ENCODE measurements at regions of chr15 and their contacts with region 1.

Region 1: GRCh38 chr15:66497502-66498455 is at the start of gene SNAPC5:
- DNase-seq: peak; percentile 94 to 99 (median 96)
- ATAC-seq: peak; percentile 97
- H3K4me3 ChIP-seq: peak within 1 kb of the TSS; percentile 80
- H3K4me3 Mint-ChIP-seq: peak within 1 kb of the TSS; percentile 89 to 98 (median 97)
- H3K27ac ChIP-seq: peak within 1 kb of the TSS; percentile 91
- H3K27ac Mint-ChIP-seq: peak within 1 kb of the TSS; percentile 94 to 99 (median 98)
- H3K4me1 ChIP-seq: peaks cover 18 to 28% of the 10 kb centered on the region in 2 donors
- H3K4me1 Mint-ChIP-seq: peaks cover 21 to 66% (median 49%) of the 10 kb centered on the region in 7 donors
- H3K27me3 ChIP-seq: no peaks in the 10 kb centered on the region
- H3K27me3 Mint-ChIP-seq: no peaks in the 10 kb centered on the region
- total RNA-seq, gene SNAPC5: 20.4 to 35.9 (median 25.0) TPM

Region 2: DNA sequence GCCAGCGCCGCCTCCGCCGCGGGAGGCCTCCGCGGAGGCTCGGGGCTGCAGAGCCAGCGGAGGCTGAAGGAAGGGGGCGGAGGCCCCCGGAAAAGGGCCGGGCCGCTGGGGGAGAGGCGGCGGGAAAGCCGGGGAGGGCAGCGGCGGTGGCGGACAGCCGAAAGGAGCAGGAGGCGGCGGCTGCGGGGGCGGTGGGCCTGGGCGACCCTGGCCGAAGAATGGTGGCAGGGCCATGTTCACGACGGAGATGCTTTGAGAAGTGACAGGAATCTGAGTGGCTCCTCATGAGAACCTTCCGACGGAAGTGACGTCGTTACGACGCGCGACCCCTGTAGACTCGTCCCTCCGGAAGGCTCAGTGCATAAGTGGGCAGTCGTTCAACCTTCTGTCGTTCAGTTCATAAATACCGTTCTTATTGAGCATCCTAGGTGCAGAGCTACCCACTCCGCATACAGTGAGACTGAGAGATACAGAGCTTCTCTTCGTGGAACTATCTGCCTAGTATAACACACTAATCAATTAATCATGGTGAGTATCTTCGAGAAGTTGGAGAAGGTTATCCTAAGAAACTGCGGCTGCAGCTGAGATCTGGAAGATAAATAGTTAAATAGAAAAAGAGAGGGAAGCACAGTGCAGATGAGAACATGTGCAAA is 1364.1 kb before region 1 on chr15 and contains the start of gene PDCD7:
- CTCF ChIA-PET with region 1: no interaction called
- POLR2A ChIA-PET with region 1: no interaction called
- intact Hi-C with region 1: loop called in 1 of 2 experiments (anchors 5 kb)
- DNase-seq: peak; percentile 52 to 89 (median 81)
- ATAC-seq: peak; percentile 95
- H3K4me3 ChIP-seq: peak within 1 kb of the TSS; percentile 81
- H3K4me3 Mint-ChIP-seq: peak within 1 kb of the TSS; percentile 88 to 100 (median 92)
- H3K27ac ChIP-seq: peak within 1 kb of the TSS; percentile 94
- H3K27ac Mint-ChIP-seq: peak within 1 kb of the TSS; percentile 90 to 98 (median 96)
- H3K4me1 ChIP-seq: peaks cover 6 to 14% of the 10 kb centered on the region in 2 donors
- H3K4me1 Mint-ChIP-seq: peaks cover 20 to 43% (median 35%) of the 10 kb centered on the region in 7 donors
- H3K27me3 ChIP-seq: no peaks in the 10 kb centered on the region
- H3K27me3 Mint-ChIP-seq: peaks cover 0 to 2% (median 0%) of the 10 kb centered on the region in 5 donors
- total RNA-seq, gene PDCD7: 23.0 to 38.6 (median 36.9) TPM

Region 3: GRCh38 chr15:66251790-66252684 is 245.7 kb before region 1 on chr15:
- CTCF ChIA-PET with region 1: no interaction called
- POLR2A ChIA-PET with region 1: no interaction called
- intact Hi-C with region 1: loop called (anchors 1 kb)
- DNase-seq: peak in 7 of 9 donors; percentile 22 to 63 (median 36)
- ATAC-seq: peak; percentile 73
- H3K4me3 ChIP-seq: peak overlapping the region; percentile 76
- H3K4me3 Mint-ChIP-seq: peak overlapping the region; percentile 58 to 96 (median 79)
- H3K27ac ChIP-seq: no peak overlapping the region
- H3K27ac Mint-ChIP-seq: no peak overlapping the region
- H3K4me1 ChIP-seq: peaks cover 0 to 14% of the 10 kb centered on the region in 2 donors
- H3K4me1 Mint-ChIP-seq: peaks cover 7 to 28% (median 18%) of the 10 kb centered on the region in 7 donors
- H3K27me3 ChIP-seq: peaks cover 3 to 28% of the 10 kb centered on the region in 2 donors
- H3K27me3 Mint-ChIP-seq: peaks cover 54 to 89% (median 70%) of the 10 kb centered on the region in 5 donors

Region 4: DNA sequence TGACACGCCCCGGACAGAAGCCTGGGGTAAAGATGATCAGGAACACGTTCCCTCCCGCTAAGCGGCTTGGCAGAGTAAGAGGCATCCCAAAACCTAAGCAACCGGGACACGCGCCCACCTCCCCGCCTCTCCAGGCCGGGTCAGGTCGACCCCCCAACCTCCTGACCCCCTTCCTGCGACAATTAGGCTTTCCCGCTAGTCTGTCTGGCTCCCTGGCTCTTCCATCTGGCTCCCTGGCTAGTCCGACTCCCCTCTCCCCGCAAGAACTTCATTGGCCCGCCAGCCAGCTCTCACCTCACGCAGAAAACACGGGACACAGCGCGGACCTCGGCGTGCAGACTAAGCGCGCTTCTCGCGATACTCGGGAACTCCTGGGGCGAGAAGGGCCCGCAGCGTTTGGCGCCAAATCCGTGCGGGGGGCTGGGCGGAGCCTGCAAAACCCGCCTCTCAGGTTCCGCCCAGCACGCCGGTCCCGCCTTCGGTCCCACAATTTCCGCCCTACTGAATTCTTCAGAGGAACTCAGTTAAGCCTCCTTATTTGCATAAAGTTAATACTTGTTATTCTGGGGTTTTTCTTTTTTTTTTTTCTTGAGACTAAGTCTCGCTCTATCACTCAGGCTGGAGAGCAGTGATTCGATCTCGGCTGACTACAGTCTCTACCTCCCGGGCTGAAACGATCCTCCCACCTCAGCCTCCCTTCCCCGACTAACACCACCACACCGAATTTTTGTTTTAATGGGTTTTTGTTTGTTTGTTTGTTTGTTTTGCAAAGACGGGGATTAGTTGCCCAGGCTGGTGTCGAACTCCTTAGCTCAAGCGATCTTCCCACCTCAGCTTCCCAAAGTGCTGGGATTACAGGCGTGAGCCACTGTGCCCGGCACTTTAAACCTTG is 141.2 kb before region 1 on chr15 and contains the start of gene TIPIN:
- CTCF ChIA-PET with region 1: interaction called, 22 read pairs
- POLR2A ChIA-PET with region 1: interaction called, 3 read pairs
- intact Hi-C with region 1: loop called (anchors 1 kb)
- DNase-seq: peak; percentile 90 to 96 (median 95)
- ATAC-seq: peak; percentile 99
- H3K4me3 ChIP-seq: peak within 1 kb of the TSS; percentile 92
- H3K4me3 Mint-ChIP-seq: peak within 1 kb of the TSS; percentile 92 to 100 (median 96)
- H3K27ac ChIP-seq: peak within 1 kb of the TSS; percentile 82
- H3K27ac Mint-ChIP-seq: peak within 1 kb of the TSS; percentile 90 to 98 (median 97)
- H3K4me1 ChIP-seq: peaks cover 4 to 6% of the 10 kb centered on the region in 2 donors
- H3K4me1 Mint-ChIP-seq: peaks cover 18 to 35% (median 26%) of the 10 kb centered on the region in 7 donors
- H3K27me3 ChIP-seq: no peaks in the 10 kb centered on the region
- H3K27me3 Mint-ChIP-seq: no peaks in the 10 kb centered on the region
- total RNA-seq, gene TIPIN: 3.8 to 28.2 (median 9.9) TPM

Region 5: DNA sequence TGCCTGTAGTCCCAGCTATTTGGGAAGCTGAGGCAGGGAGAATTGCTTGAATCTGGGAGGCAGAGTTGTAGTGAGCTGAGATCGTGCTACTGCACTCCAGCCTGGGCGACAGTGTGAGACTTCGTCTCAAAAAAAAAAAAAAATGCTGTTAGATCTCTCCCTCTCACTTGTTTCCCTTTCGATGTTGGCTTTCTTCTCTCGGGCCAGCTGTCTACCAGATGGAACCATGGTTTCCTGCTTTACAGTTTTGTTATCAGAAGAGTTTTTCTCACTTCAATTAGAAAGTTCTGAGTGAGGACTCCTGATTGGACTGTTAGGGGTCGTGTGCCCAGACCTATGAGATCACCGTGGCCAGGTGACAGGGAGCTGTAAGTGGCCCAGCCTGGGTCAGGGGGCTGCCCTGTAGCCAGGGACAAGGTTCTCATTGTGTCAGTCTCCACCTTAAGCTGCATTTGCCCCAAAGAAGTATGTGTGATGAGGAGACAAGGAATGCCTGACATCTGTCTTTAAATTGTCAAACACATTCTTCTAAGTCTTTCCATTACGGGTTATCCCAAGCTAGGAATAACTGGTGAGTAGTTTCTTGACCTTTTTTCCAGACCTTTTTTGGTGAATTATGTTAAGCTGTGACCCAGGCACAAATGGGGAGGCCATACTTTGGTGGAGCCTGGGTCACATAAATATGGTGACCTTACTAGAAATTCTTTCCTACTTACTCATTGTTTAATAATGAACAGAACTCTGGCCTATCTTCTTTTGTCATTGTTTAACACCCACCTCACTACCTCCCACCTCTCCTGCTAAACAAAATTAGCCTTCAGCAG is 25.4 kb before region 1 on chr15:
- CTCF ChIA-PET with region 1: interaction called, 7 read pairs
- POLR2A ChIA-PET with region 1: interaction called, 7 read pairs
- intact Hi-C with region 1: loop called (anchors 1 to 2 kb)
- DNase-seq: peak; percentile 17 to 83 (median 79)
- ATAC-seq: peak; percentile 95
- H3K4me3 ChIP-seq: peak overlapping the region; percentile 22
- H3K4me3 Mint-ChIP-seq: peak overlapping the region; percentile 64 to 94 (median 82)
- H3K27ac ChIP-seq: peak overlapping the region; percentile 45
- H3K27ac Mint-ChIP-seq: peak overlapping the region; percentile 86 to 99 (median 95)
- H3K4me1 ChIP-seq: peaks cover 20 to 21% of the 10 kb centered on the region in 2 donors
- H3K4me1 Mint-ChIP-seq: peaks cover 26 to 62% (median 57%) of the 10 kb centered on the region in 7 donors
- H3K27me3 ChIP-seq: no peaks in the 10 kb centered on the region
- H3K27me3 Mint-ChIP-seq: no peaks in the 10 kb centered on the region

Measured in naive thymus-derived CD4-positive, alpha-beta T cell (primary cell).